T-cell (primary cell): ENCODE measurements at regions of chr4 and their contacts with region 1.

Region 1: GRCh38 chr4:141467225-141467624 is 169.2 kb upstream of the IL15 start:
- DNase-seq: no peak
- ATAC-seq: no peak
- H3K4me3 ChIP-seq: no peak overlapping the region
- H3K4me3 Mint-ChIP-seq: no peak overlapping the region
- H3K27ac ChIP-seq: no peak overlapping the region
- H3K27ac Mint-ChIP-seq: no peak overlapping the region
- H3K4me1 ChIP-seq: no peaks in the 10 kb centered on the region
- H3K4me1 Mint-ChIP-seq: no peaks in the 10 kb centered on the region
- H3K27me3 ChIP-seq: no peaks in the 10 kb centered on the region
- H3K27me3 Mint-ChIP-seq: no peaks in the 10 kb centered on the region

Region 2: GRCh38 chr4:141356963-141357335 is 110.3 kb before region 1 on chr4:
- CTCF ChIA-PET with region 1: no interaction called
- POLR2A ChIA-PET with region 1: interaction called in 1 of 2 experiments, 10 read pairs
- DNase-seq: no peak
- ATAC-seq: no peak
- H3K4me3 ChIP-seq: no peak overlapping the region
- H3K4me3 Mint-ChIP-seq: no peak overlapping the region
- H3K27ac ChIP-seq: no peak overlapping the region
- H3K27ac Mint-ChIP-seq: no peak overlapping the region
- H3K4me1 ChIP-seq: no peaks in the 10 kb centered on the region
- H3K4me1 Mint-ChIP-seq: peaks cover 0 to 7% (median 0%) of the 10 kb centered on the region in 3 donors
- H3K27me3 ChIP-seq: no peaks in the 10 kb centered on the region
- H3K27me3 Mint-ChIP-seq: peaks cover 4 to 7% of the 10 kb centered on the region in 2 donors